Ascending aorta (tissue), 2 donors: ENCODE measurements at regions of chr9 and their contacts with region 1.

Region 1: DNA sequence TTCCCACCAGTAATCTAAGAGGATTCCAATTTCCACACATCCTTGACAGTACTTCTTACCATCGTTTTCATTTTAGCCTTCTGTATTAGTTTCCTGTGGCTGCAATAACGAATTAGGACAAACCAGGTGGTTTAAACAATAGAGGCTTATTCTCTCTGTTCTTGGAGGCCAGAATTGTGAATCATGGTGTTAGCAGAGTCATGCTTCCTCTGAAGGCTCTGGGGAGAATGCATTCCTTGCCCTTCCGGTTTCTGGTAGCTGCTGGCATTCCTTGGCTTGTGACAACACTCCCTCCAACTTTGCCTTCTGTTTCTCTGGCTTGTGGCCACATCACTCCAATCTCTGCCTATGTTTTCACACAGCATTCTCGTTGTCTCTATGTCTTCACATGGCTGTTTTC is 23.5 kb downstream of the RIGI start:
- DNase-seq: no peak
- H3K4me3 ChIP-seq: no peak overlapping the region
- H3K27ac ChIP-seq: no peak overlapping the region
- H3K4me1 ChIP-seq: no peaks in the 10 kb centered on the region
- H3K27me3 ChIP-seq: no peaks in the 10 kb centered on the region
- CTCF ChIP-seq: no peak

Region 2: DNA sequence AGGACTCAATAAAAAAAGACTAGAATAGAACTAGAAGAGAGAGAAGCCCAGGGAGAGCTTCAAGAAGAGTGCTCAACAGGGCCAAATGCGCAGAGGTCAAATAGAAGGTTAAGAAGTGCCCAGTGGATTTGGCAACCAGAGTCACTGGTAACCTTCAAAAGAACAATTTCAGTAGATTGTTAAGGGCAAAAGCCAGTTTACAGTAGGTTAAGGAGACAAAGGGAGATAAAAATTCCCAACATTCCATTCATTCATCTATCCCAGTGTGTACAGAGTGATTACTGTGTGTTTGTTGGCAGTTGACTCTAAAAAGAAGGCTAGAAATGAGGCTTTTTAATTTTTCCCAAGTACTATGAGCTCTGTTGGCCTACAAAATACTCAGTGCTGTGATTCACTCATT is 45.9 kb before region 1 on chr9:
- intact Hi-C with region 1: loop called (anchors 10 kb)
- DNase-seq: no peak
- H3K4me3 ChIP-seq: no peak overlapping the region
- H3K27ac ChIP-seq: no peak overlapping the region
- H3K4me1 ChIP-seq: no peaks in the 10 kb centered on the region
- H3K27me3 ChIP-seq: no peaks in the 10 kb centered on the region
- CTCF ChIP-seq: no peak

Region 3: GRCh38 chr9:32742274-32742673 is 239.8 kb after region 1 on chr9:
- intact Hi-C with region 1: no loop called
- DNase-seq: no peak
- H3K4me3 ChIP-seq: no peak overlapping the region
- H3K27ac ChIP-seq: no peak overlapping the region
- H3K4me1 ChIP-seq: no peaks in the 10 kb centered on the region
- H3K27me3 ChIP-seq: no peaks in the 10 kb centered on the region
- CTCF ChIP-seq: no peak